AG04450 (cell line): ENCODE measurements at regions of chr18 and their contacts with region 1.

Region 1: GRCh38 chr18:55234366-55235093 is 275.3 kb upstream of the CCDC68 start:
- DNase-seq: peak; percentile 56
- H3K4me3 ChIP-seq: no peak overlapping the region
- H3K27ac ChIP-seq: no peak overlapping the region
- H3K27me3 ChIP-seq: no peaks in the 10 kb centered on the region
- CTCF ChIP-seq: peak; percentile 90

Region 2: GRCh38 chr18:55287149-55287806 is 52.7 kb after region 1 on chr18:
- CTCF ChIA-PET with region 1: interaction called, 10 read pairs
- POLR2A ChIA-PET with region 1: no interaction called
- DNase-seq: no peak
- H3K4me3 ChIP-seq: no peak overlapping the region
- H3K27ac ChIP-seq: no peak overlapping the region
- H3K27me3 ChIP-seq: no peaks in the 10 kb centered on the region
- CTCF ChIP-seq: no peak

Region 3: GRCh38 chr18:55351980-55352714 is 117.6 kb after region 1 on chr18:
- CTCF ChIA-PET with region 1: interaction called, 13 read pairs
- POLR2A ChIA-PET with region 1: no interaction called
- DNase-seq: no peak
- H3K4me3 ChIP-seq: no peak overlapping the region
- H3K27ac ChIP-seq: no peak overlapping the region
- H3K27me3 ChIP-seq: no peaks in the 10 kb centered on the region
- CTCF ChIP-seq: no peak

Region 4: GRCh38 chr18:55861266-55861665 is 626.7 kb after region 1 on chr18:
- CTCF ChIA-PET with region 1: interaction called, 14 read pairs
- POLR2A ChIA-PET with region 1: no interaction called
- DNase-seq: no peak
- H3K4me3 ChIP-seq: no peak overlapping the region
- H3K27ac ChIP-seq: no peak overlapping the region
- H3K27me3 ChIP-seq: no peaks in the 10 kb centered on the region
- CTCF ChIP-seq: peak; percentile 67